Right ventricle myocardium superior (tissue), 1 donor: ENCODE measurements at regions of chr19 and their contacts with region 1.

Region 1: DNA sequence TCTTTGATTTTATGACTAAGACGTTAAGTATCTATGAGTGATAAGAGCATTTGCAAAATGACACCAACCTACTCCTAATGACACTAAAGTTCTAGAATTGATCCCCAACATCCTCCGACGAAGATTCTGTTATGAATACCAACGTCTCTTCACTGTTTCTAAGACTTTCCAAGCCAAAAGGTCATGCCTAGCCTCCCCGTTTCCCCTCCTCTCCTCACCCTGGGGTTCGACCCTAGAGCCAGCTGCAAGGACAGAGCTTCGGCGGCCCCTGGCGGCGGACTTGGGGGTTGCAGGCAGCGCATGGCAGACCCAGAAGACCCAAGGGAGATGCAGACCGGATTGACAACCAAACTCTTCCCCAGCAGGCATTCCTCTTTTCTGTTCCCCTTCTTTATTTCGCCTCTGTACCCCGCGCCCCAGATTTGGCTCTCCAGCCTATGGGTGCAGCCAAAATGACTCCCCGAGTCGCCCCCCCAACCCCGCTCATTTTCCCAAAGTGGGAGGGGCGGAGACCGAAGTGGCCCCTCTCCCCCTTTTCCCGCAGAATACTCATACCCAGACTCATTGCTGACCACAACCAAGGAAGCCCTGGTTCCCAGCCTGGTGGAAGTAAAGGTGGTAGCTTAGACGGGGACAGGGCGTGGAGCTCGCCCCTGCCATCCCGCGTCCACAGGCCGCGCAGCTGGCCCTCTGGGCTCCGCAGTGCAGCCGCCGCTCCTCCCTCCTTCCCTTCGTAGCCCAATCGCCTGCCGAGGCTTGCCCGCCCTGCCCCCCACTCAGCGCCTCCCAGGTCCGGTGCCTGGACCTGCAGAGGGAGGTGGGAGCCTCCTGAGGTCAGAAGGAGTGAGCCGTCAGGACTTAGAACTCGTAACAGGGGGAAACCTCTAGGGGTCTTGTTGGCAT is 4.1 kb upstream of the EML2 start:
- DNase-seq: peak; percentile 93
- ATAC-seq: peak; percentile 68

Region 2: DNA sequence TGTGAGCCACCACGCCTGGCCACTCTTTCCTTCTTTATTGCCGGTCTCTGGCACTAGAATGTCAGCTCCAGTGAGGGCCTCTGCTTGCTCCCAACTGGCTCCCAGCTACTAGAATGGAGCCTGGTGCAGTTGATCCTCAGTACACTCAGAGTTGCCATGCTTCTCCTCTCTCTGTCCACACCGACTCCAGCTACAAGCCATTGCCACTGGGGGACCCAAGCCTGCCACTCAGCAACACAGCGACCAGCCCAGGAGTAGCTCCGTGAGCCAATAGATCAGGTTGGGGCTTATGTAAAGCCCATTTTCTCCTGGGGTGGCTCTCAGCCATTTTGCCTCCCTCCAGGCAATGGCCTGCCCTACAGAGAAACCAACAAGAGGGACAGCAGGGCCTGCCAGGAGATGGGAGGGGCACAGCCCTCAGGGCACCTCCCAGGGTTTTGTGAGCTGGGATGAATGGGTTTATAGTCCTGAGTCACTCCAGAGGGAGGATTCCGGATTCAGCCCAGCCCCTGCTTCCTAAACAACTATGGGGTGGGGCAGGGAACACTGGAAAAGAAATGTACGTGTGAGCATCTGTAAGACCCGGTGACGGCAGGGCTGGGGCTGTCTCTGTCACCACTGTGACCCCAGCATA is 95.2 kb before region 1 on chr19:
- intact Hi-C with region 1: no loop called
- DNase-seq: no peak
- ATAC-seq: no peak

Region 3: GRCh38 chr19:45607071-45608029 is 35.9 kb before region 1 on chr19:
- intact Hi-C with region 1: loop called (anchors 2 kb)
- DNase-seq: peak; percentile 86
- ATAC-seq: peak; percentile 86